Heart right ventricle (tissue), 16 donors: ENCODE measurements at regions of chr11 and their contacts with region 1.

Region 1: DNA sequence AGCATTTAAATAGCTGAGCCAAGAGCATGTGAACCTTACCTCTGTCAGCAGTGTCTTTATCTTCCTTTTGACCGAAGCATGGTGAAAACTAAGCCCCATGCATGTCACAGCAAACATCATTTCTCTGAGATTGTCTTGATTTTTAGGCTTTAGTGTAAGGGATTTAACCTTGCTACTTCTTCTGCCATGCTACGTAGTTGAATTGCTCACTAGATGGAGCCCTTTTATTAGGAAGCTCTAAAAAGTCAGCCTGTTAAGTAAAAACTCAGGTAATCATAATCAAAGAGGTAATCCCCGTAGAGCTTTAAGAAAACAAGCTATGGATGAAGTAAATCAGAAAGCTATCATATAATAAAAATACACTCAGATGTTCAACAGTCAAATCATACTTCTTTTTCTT is 149.5 kb downstream of the PGR start:
- DNase-seq: no peak
- ATAC-seq: peak in 3 of 8 donors; percentile 39 to 54 (median 53)
- H3K4me3 ChIP-seq: no peak overlapping the region
- H3K27ac ChIP-seq: no peak overlapping the region
- H3K4me1 ChIP-seq: no peaks in the 10 kb centered on the region
- H3K27me3 ChIP-seq: no peaks in the 10 kb centered on the region
- CTCF ChIP-seq: peak in 7 of 9 donors; percentile 45 to 68 (median 56)

Region 2: GRCh38 chr11:101323997-101324396 is 343.8 kb after region 1 on chr11:
- intact Hi-C with region 1: loop called in 7 of 10 experiments (anchors 5 to 10 kb)
- DNase-seq: no peak
- ATAC-seq: peak in 1 of 8 donors; percentile 55
- H3K4me3 ChIP-seq: no peak overlapping the region
- H3K27ac ChIP-seq: no peak overlapping the region
- H3K4me1 ChIP-seq: no peaks in the 10 kb centered on the region
- H3K27me3 ChIP-seq: no peaks in the 10 kb centered on the region
- CTCF ChIP-seq: peak in 7 of 9 donors; percentile 18 to 55 (median 39)

Region 3: GRCh38 chr11:101436511-101437142 is 456.5 kb after region 1 on chr11:
- intact Hi-C with region 1: loop called (anchors 2 to 10 kb)
- DNase-seq: peak in 1 of 2 donors; percentile 17
- ATAC-seq: peak in 3 of 8 donors; percentile 37 to 55 (median 54)
- H3K4me3 ChIP-seq: no peak overlapping the region
- H3K27ac ChIP-seq: no peak overlapping the region
- H3K4me1 ChIP-seq: peaks cover 0 to 15% (median 0%) of the 10 kb centered on the region in 9 donors
- H3K27me3 ChIP-seq: no peaks in the 10 kb centered on the region
- CTCF ChIP-seq: peak; percentile 33 to 74 (median 63)